ENCODE measurements at regions of chr15 and their contacts with region 1.

Region 1: GRCh38 chr15:74928771-74929198 is 9.1 kb downstream of the COX5A start:
- DNase-seq: no peak
- H3K4me3 Mint-ChIP-seq: no peak overlapping the region
- H3K27ac Mint-ChIP-seq: no peak overlapping the region
- H3K4me1 Mint-ChIP-seq: no peaks in the 10 kb centered on the region
- H3K27me3 Mint-ChIP-seq: no peaks in the 10 kb centered on the region
- CTCF ChIP-seq: no peak

Region 2: DNA sequence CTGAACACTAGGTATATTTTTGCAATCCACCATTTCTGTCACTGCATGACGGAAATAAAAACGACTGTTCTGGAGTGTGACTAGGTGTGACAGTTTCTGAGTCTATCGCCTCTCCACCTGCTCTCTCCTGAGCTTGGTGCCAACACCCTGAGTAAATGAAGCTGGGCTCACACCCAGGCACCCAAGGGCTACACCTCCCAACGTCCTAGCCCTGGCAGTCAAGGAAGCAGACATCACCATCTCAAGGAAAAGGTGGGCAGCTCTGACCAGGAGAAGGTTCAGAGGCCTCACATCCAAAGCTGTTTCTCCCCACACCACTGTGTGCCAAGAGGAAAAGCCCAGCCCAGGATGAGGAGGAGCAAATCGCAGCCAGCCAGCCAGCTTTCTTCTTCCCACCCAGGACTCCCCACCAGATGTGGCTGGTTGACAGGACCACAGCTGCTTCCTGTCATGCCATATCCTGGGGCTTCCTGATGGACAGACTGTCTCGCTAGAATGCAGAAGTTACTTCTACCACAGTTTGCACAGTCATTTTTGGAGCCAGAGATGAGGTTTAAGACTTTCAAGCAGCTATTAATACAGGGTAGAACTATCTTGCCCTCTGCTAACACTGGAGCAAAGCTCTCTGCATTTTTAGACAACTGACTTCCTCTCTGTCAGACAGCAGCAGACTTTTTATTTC is 58.9 kb before region 1 on chr15:
- CTCF ChIA-PET with region 1: interaction called, 15 read pairs
- intact Hi-C with region 1: no loop called
- DNase-seq: no peak
- H3K4me3 Mint-ChIP-seq: no peak overlapping the region
- H3K27ac Mint-ChIP-seq: no peak overlapping the region
- H3K4me1 Mint-ChIP-seq: peaks cover 66% of the 10 kb centered on the region
- H3K27me3 Mint-ChIP-seq: no peaks in the 10 kb centered on the region
- CTCF ChIP-seq: no peak